ENCODE measurements at regions of chr22 and their contacts with region 1.

Region 1: GRCh38 chr22:19431649-19432132 is at the start of gene HIRA:
- DNase-seq: peak; percentile 81 to 93 (median 92)
- ATAC-seq: peak; percentile 80 to 81
- H3K4me3 ChIP-seq: peak within 1 kb of the TSS; percentile 93
- H3K27ac ChIP-seq: peak within 1 kb of the TSS; percentile 85
- H3K4me1 ChIP-seq: peaks cover 2% of the 10 kb centered on the region
- H3K27me3 ChIP-seq: no peaks in the 10 kb centered on the region
- total RNA-seq, gene HIRA: 11.6 to 16.1 (median 14.6) TPM

Region 2: GRCh38 chr22:19201869-19202798 is 229.6 kb before region 1 on chr22:
- intact Hi-C with region 1: no loop called
- DNase-seq: peak in 2 of 3 donors; percentile 47 to 73
- ATAC-seq: peak in 1 of 2 donors; percentile 63
- H3K4me3 ChIP-seq: no peak overlapping the region
- H3K27ac ChIP-seq: no peak overlapping the region
- H3K4me1 ChIP-seq: no peaks in the 10 kb centered on the region
- H3K27me3 ChIP-seq: no peaks in the 10 kb centered on the region

Region 3: GRCh38 chr22:19479357-19480172 is 47.9 kb after region 1 on chr22 and contains the start of gene CDC45:
- intact Hi-C with region 1: loop called in 1 of 4 experiments (anchors 2 kb)
- DNase-seq: peak; percentile 96 to 98 (median 97)
- ATAC-seq: peak; percentile 97 to 98
- H3K4me3 ChIP-seq: peak within 1 kb of the TSS; percentile 87
- H3K27ac ChIP-seq: peak within 1 kb of the TSS; percentile 98
- H3K4me1 ChIP-seq: no peaks in the 10 kb centered on the region
- H3K27me3 ChIP-seq: no peaks in the 10 kb centered on the region
- total RNA-seq, gene CDC45: 0.80 to 0.85 TPM in 2 of 4 donors, not detected in the others

Region 4: DNA sequence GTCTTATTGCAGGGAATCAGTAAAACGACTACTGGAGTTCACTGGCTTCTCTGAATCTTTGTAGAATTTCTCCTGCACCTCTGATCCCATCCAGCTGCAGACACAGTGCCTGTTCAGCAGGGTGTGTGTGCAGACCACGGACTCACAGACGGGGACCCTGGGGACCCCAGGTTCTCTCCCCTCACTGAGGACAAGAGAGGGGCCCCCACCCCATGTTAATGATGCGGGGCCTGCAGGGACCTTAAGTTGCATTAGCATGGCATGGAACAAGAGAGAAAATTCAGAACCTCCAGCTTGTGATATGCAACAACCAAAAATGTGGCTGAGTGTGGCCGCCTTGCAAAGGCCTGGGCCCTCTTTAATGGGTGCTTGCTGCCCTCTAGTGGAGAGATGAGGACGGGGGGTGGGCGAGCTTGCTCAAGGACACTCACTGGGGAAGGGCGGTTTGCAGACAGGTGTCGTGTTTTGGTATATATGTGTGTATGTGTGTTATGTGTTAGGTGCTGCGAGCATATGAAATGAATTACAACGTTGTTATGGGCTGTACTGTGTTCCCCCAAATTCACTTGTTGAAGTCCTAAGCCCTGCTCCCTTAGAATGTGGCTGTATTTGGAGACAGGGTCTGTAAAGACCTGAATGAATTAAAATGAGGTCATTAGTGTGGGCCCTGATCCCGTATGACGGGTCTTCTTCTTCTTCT is 198.2 kb after region 1 on chr22:
- intact Hi-C with region 1: no loop called
- DNase-seq: peak; percentile 69 to 88 (median 86)
- ATAC-seq: peak; percentile 76 to 88
- H3K4me3 ChIP-seq: no peak overlapping the region
- H3K27ac ChIP-seq: no peak overlapping the region
- H3K4me1 ChIP-seq: no peaks in the 10 kb centered on the region
- H3K27me3 ChIP-seq: no peaks in the 10 kb centered on the region

Measured in right cardiac atrium (tissue), 5 donors.